Mammary epithelial cell (primary cell): ENCODE measurements at regions of chr6 and their contacts with region 1.

Region 1: DNA sequence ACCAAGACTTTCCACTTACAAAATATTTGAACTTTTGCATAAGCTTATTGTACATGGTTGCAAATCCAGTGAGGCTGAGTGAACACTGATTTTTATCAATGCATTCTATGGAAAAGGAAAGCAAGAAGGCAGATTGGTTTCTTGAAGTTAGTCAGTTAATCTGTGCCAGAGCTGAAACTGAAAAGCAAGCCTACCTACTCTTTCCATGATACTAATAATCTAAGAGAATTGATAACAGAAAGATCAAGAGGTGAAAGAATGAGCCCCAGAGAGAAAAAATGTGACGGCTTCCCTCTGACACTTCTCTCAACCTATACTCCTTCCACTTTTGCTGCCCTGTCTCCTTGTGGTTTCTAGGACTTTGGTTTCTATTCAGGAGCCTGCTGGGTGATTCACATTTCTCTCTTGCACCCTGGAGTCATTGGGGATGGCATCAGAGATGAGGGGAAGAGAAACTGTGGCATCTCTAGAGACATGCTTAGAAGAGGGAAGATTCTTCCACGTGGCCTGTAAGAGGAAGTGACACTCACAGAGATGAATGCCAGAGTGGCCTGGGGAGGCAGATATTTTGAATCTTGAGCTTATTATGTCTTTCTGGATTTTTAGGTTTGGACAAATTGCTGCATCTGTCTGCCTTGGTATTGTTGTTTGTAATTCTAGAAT is 158.6 kb upstream of the RIMS1 start:
- DNase-seq: no peak
- H3K4me3 ChIP-seq: no peak overlapping the region
- H3K27ac ChIP-seq: no peak overlapping the region
- H3K4me1 ChIP-seq: no peaks in the 10 kb centered on the region
- H3K27me3 ChIP-seq: no peaks in the 10 kb centered on the region
- CTCF ChIP-seq: no peak

Region 2: DNA sequence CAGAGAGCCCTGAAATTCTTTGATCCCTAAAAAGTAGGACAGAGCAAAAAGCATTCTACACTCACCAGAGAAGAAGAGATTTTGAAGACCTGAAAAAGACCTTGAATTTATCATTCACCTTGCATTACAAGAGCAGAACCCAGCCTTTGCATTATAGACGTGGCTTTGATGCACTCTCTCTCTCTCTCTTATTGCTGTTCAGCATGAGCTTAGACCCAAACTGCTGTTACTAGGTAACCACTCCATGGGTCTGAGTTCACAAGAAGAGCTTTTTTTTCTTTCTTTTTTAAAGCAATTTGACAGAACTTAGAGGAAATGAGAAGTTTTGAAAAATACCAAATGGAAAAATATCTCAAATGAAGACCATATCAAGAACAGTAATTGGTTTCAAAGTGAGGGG is 1469.3 kb before region 1 on chr6:
- CTCF ChIA-PET with region 1: no interaction called
- dilution Hi-C with region 1: no loop called
- in situ Hi-C with region 1: no loop called
- intact Hi-C with region 1: no loop called
- DNase-seq: no peak
- H3K4me3 ChIP-seq: no peak overlapping the region
- H3K27ac ChIP-seq: no peak overlapping the region
- H3K4me1 ChIP-seq: no peaks in the 10 kb centered on the region
- H3K27me3 ChIP-seq: peaks cover 8% of the 10 kb centered on the region
- CTCF ChIP-seq: no peak

Region 3: GRCh38 chr6:71621918-71622519 is 105.7 kb before region 1 on chr6:
- CTCF ChIA-PET with region 1: no interaction called
- dilution Hi-C with region 1: loop called (anchors 5 kb)
- in situ Hi-C with region 1: no loop called
- intact Hi-C with region 1: no loop called
- DNase-seq: no peak
- H3K4me3 ChIP-seq: no peak overlapping the region
- H3K27ac ChIP-seq: no peak overlapping the region
- H3K4me1 ChIP-seq: no peaks in the 10 kb centered on the region
- H3K27me3 ChIP-seq: peaks cover 2% of the 10 kb centered on the region
- CTCF ChIP-seq: peak; percentile 42 to 56

Region 4: DNA sequence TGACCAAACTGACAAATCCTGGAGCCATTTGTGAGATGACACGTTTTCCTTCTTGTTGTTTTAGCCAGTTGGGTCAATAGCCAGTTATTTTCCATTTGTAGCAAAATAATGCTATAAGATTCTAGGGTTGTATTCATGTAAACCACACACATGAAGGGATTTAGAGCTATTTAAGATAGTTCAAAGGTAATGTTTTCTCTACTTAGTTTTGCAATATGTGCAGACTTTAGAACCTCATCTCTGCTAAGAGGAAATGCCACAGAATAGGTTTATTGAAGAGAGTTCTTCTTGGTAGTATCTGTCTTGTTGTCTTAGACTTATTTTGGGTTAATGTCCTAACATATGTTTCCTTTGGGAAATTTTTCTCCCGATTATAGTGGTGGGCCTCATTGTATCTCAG is 54.9 kb before region 1 on chr6:
- CTCF ChIA-PET with region 1: no interaction called
- dilution Hi-C with region 1: loop called (anchors 5 kb)
- in situ Hi-C with region 1: no loop called
- intact Hi-C with region 1: no loop called
- DNase-seq: no peak
- H3K4me3 ChIP-seq: no peak overlapping the region
- H3K27ac ChIP-seq: no peak overlapping the region
- H3K4me1 ChIP-seq: no peaks in the 10 kb centered on the region
- H3K27me3 ChIP-seq: peaks cover 7% of the 10 kb centered on the region
- CTCF ChIP-seq: no peak